Mammary epithelial cell (primary cell): ENCODE measurements at regions of chr4 and their contacts with region 1.

Region 1: DNA sequence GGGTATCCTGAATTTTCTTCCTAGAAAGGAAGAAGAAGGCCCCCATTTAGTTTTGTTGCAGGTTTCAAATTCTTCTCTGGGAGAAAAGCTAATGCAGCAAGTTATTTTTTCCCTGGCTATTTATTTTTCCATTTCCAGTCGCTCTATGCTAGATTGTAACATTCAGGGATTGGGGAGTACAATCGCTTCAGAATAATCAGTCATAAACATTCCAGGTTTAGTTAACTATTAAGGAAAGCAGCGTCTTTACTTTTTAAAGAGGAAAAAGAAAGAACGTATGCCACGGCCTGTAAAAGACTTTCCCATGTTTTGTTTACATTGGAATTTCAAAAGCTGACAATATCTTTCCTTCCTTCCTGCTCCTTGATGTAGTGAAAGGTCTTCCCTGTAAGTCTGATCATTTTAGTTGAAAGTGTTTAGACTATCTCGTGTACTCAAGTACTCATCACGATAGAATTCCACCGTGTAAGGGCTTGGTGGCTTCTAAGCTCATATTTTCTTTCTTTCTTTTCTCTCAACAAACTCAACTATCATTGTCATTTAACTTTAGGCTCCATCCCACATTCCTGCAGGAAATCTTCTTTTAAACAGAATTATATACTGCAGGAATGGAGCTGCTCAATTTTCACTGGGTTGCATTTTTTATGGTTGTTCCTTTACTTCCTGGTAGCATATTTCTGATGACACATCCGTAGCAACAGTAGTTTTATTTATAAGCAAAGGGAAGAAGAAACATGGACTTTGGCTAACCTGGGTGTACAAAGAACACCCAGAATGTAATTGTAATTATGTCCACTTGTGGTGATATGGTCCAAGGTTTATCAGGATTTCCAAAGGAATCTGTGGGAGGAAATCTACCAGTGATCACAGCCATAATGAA is 213.1 kb upstream of the FAT1 start:
- DNase-seq: peak; percentile 79
- H3K4me3 ChIP-seq: no peak overlapping the region
- H3K27ac ChIP-seq: peak overlapping the region; percentile 74
- H3K4me1 ChIP-seq: peaks cover 24% of the 10 kb centered on the region
- H3K27me3 ChIP-seq: no peaks in the 10 kb centered on the region
- CTCF ChIP-seq: peak; percentile 43 to 49

Region 2: DNA sequence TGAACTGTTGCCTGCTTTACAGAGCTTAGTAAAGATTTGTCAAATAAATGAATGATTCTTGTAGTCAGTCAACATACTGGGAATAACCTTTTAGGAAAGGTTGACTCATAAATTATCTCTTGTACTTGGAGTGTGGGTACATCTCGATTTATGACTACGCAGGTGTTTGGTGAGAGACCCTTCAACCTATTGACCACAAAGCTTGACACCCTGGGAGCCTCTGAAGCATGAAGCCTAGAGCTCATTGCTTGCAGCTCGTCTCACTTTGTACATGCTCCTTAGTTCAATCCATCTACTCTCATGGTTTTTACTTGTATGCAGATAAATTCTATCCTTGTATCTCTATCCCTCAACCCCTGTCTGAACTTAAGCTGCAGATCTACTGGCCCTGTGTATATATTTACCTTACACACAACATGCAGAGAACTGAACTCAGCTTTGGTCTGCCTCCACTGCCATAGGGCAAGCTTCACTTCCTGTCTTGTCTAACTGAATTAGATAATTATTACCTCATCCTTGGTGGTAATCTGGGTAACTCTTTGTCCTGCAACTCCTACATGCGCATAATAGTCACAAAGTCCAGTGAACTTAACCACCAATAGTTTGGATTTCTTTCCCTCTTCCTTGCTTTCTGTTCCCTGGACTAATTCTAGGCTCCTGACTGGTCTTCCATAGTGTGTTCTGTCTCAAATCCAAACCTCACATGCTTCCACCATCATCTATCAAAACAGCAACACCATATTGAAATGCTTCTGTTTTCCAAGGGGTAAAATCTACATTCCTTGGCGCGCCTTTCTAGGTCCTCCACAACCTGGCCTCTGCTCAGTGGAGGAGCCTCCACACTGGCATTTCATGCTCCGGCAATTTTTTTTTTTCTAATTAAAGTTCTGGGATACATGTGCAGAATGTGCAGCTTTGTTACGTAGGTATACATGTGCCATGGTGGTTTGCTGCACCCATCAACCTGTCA is 180.9 kb before region 1 on chr4:
- CTCF ChIA-PET with region 1: no interaction called
- dilution Hi-C with region 1: no loop called
- in situ Hi-C with region 1: no loop called
- intact Hi-C with region 1: no loop called
- DNase-seq: no peak
- H3K4me3 ChIP-seq: no peak overlapping the region
- H3K27ac ChIP-seq: no peak overlapping the region
- H3K4me1 ChIP-seq: no peaks in the 10 kb centered on the region
- H3K27me3 ChIP-seq: no peaks in the 10 kb centered on the region
- CTCF ChIP-seq: no peak

Region 3: GRCh38 chr4:186839122-186840037 is 97.4 kb before region 1 on chr4:
- CTCF ChIA-PET with region 1: no interaction called
- dilution Hi-C with region 1: no loop called
- in situ Hi-C with region 1: no loop called
- intact Hi-C with region 1: loop called (anchors 10 kb)
- DNase-seq: peak; percentile 35
- H3K4me3 ChIP-seq: peak overlapping the region in 1 of 3 experiments; percentile 13
- H3K27ac ChIP-seq: peak overlapping the region; percentile 56
- H3K4me1 ChIP-seq: peaks cover 22% of the 10 kb centered on the region
- H3K27me3 ChIP-seq: no peaks in the 10 kb centered on the region
- CTCF ChIP-seq: no peak

Region 4: GRCh38 chr4:186881521-186882220 is 55.1 kb before region 1 on chr4:
- CTCF ChIA-PET with region 1: interaction called, 3 read pairs
- dilution Hi-C with region 1: no loop called
- in situ Hi-C with region 1: no loop called
- intact Hi-C with region 1: loop called (anchors 5 kb)
- DNase-seq: peak; percentile 70
- H3K4me3 ChIP-seq: no peak overlapping the region
- H3K27ac ChIP-seq: peak overlapping the region; percentile 48
- H3K4me1 ChIP-seq: peaks cover 26% of the 10 kb centered on the region
- H3K27me3 ChIP-seq: no peaks in the 10 kb centered on the region
- CTCF ChIP-seq: no peak

Region 5: DNA sequence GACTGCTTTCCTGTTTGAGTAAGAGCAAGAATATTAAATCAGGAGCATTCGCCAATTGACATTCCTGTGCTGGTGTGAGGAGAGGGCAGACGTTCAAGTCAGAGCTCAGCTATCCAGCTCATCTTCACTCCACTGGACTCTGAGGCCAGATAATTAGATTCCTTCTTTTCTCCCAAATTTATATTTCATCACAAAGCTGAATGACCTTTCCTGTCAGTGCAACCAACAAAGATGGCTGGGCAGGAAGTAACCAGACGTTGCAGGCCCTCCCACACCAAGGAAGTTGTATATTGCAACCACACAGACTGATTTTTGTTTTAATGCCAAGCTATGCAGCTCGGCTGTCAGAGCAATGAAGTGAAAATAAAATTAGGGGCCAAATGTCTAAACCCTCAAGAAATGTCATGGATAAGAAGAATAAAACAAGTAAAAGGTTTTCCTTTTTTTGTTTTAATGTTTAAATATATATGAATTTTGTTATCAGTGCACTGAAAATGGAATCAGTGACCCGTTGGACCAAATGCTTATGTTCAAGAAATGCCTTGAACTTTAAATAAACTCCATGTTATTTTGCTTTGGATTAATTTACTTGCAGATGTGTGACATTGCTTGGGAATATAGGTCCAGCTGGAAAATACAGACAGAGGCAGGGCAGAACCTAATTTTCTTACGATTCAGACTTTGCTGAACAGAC is 365.9 kb after region 1 on chr4:
- CTCF ChIA-PET with region 1: no interaction called
- dilution Hi-C with region 1: no loop called
- in situ Hi-C with region 1: no loop called
- intact Hi-C with region 1: loop called (anchors 10 kb)
- DNase-seq: no peak
- H3K4me3 ChIP-seq: no peak overlapping the region
- H3K27ac ChIP-seq: no peak overlapping the region
- H3K4me1 ChIP-seq: peaks cover 19% of the 10 kb centered on the region
- H3K27me3 ChIP-seq: no peaks in the 10 kb centered on the region
- CTCF ChIP-seq: no peak

Region 6: GRCh38 chr4:187606581-187606980 is 669.8 kb after region 1 on chr4:
- CTCF ChIA-PET with region 1: no interaction called
- dilution Hi-C with region 1: no loop called
- in situ Hi-C with region 1: no loop called
- intact Hi-C with region 1: loop called (anchors 10 kb)
- DNase-seq: peak; percentile 57
- H3K4me3 ChIP-seq: no peak overlapping the region
- H3K27ac ChIP-seq: no peak overlapping the region
- H3K4me1 ChIP-seq: peaks cover 16% of the 10 kb centered on the region
- H3K27me3 ChIP-seq: no peaks in the 10 kb centered on the region
- CTCF ChIP-seq: peak; percentile 87 to 89